Adrenal gland (tissue), 19 donors: ENCODE measurements at regions of chr18 and their contacts with region 1.

Region 1: GRCh38 chr18:23515911-23516546 is 12.7 kb downstream of the RMC1 start:
- DNase-seq: peak; percentile 68 to 91 (median 80)
- H3K4me3 ChIP-seq: no peak overlapping the region
- H3K27ac ChIP-seq: peak overlapping the region in 1 of 5 donors; percentile 4
- H3K4me1 ChIP-seq: peaks cover 0 to 8% of the 10 kb centered on the region in 2 donors
- H3K27me3 ChIP-seq: no peaks in the 10 kb centered on the region
- CTCF ChIP-seq: peak; percentile 67 to 81 (median 78)
- POLR2A ChIP-seq: no peak

Region 2: GRCh38 chr18:23586249-23587196 is 70.5 kb after region 1 on chr18 and contains the start of gene NPC1:
- intact Hi-C with region 1: loop called in 1 of 2 experiments (anchors 5 kb)
- DNase-seq: peak; percentile 94 to 96 (median 95)
- H3K4me3 ChIP-seq: peak within 1 kb of the TSS; percentile 58 to 95 (median 71)
- H3K27ac ChIP-seq: peak within 1 kb of the TSS; percentile 98 to 100 (median 99)
- H3K4me1 ChIP-seq: peaks cover 0 to 40% of the 10 kb centered on the region in 2 donors
- H3K27me3 ChIP-seq: no peaks in the 10 kb centered on the region
- CTCF ChIP-seq: peak; percentile 75 to 95 (median 84)
- POLR2A ChIP-seq: peak; percentile 77 to 96
- total RNA-seq, gene NPC1: 93.6 to 1,631 (median 118) TPM

Region 3: GRCh38 chr18:23703057-23703986 is 187.3 kb after region 1 on chr18:
- intact Hi-C with region 1: loop called in 1 of 2 experiments (anchors 10 kb)
- DNase-seq: peak in 5 of 7 donors; percentile 29 to 68 (median 45)
- H3K4me3 ChIP-seq: no peak overlapping the region
- H3K27ac ChIP-seq: no peak overlapping the region
- H3K4me1 ChIP-seq: no peaks in the 10 kb centered on the region
- H3K27me3 ChIP-seq: no peaks in the 10 kb centered on the region
- CTCF ChIP-seq: peak; percentile 36 to 77 (median 68)
- POLR2A ChIP-seq: no peak